Activated CD4-positive, alpha-beta T cell treated with anti-CD3 and anti-CD28 coated beads, Interleukin-2, amount 10 ng/mL, durations not matched to agents 24 days and 14 days (primary cell): ENCODE measurements at regions of chr9 and their contacts with region 1.

Region 1: DNA sequence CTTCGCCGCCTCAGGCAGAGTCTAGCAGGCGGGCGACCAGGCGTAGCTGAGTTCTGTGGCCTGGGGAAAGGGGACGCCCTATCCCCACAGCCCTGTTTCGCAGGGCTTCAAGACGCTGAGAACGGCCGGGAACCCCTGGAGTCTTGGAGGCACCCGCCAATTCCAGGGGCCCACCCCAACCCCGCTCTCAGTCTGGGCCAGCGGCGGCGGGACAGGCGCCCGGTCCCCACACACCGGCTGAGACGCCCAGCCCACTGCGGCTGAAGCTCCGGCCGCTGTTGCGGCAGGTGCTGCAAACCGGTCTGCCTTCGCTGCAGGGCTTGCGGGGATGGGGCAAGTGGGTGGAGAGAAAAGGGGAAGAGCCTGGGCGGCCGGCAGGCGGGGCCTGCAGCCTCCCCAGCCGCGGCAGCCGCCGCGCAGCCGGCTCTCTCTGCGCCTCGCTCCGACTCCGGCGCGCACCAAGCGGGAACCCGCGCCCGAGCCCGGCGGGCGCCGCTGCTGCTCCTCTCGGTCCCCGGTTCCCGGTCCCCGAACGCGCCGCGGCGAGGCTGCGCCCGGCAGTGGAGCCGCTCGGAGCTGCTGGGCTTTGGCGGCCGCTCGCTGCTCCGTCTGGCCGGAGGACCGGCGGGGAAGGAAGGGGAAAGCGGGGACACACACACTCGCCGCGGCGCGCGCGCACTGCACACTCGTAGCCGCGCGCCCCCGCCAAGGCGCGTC is at the start of gene PIP5K1B:
- DNase-seq: peak; percentile 89
- H3K4me3 Mint-ChIP-seq: peak within 1 kb of the TSS; percentile 94
- H3K27ac Mint-ChIP-seq: peak within 1 kb of the TSS; percentile 93
- H3K4me1 Mint-ChIP-seq: peaks cover 31% of the 10 kb centered on the region
- H3K27me3 Mint-ChIP-seq: peaks cover 57% of the 10 kb centered on the region
- total RNA-seq, gene PIP5K1B: 56.6 and 58.8 TPM in 2 replicates

Region 2: DNA sequence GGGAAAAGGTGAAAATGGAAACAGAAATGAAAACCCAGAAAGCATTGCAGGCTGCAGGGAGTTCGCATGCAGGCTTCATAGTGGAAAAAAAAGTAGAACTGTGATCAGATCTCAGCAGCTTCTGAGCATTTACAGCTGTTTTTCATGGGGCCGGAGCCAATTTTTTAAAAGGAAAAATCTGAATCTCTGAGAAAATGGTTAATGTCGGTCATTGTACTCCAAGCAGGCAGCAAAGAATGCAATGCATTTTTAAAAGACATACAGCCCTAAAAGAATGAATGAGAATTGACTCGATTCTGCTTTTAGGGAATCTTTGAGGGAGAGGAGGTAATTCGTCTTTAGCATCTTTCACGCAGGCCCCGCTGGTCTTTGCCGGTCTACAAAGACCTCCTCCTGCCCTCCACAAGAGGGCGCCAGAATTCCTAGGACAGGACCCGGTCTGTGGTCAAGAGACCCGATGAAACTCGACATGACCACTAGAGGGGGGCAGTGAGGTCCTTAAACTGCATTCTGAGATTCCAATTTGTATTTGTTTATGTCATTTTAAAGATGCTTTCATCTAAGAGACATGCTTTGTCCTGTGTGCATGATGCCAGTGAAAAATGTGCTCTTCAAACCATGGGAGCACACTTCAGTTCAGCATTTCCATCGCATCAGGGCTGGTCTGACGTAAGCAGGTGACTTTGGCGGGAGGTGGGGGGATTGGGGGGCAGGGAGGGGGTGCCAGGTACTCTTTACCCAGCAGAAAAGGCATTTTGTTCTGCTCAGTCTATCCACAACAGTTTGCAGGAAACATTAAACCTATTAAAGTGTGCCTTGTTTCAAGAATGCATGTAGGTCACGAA is 120.6 kb before region 1 on chr9:
- intact Hi-C with region 1: loop called (anchors 1 kb)
- DNase-seq: peak; percentile 94
- H3K4me3 Mint-ChIP-seq: no peak overlapping the region
- H3K27ac Mint-ChIP-seq: no peak overlapping the region
- H3K4me1 Mint-ChIP-seq: peaks cover 13% of the 10 kb centered on the region
- H3K27me3 Mint-ChIP-seq: peaks cover 2% of the 10 kb centered on the region

Region 3: GRCh38 chr9:68690088-68690487 is 14.9 kb before region 1 on chr9:
- intact Hi-C with region 1: no loop called
- DNase-seq: no peak
- H3K4me3 Mint-ChIP-seq: no peak overlapping the region
- H3K27ac Mint-ChIP-seq: no peak overlapping the region
- H3K4me1 Mint-ChIP-seq: peaks cover 7% of the 10 kb centered on the region
- H3K27me3 Mint-ChIP-seq: peaks cover 21% of the 10 kb centered on the region

Region 4: DNA sequence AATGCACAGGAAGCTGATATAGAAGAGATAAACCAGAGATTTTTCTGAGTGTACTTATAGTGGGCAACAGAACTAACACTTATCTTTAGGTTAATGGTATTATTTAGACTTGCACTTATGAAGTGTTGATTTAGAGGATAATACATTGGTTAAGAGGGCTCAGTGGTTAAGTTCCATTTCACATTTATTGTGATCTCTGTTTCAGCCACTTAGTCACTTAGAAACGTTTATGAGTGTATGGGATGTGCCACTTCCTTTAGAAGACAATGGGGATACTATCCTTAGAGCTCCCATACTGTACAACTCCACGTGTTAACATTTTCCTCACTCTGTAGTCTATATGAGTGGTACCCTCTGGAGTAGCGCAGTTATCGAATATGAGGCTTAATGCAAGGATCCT is 57.6 kb after region 1 on chr9:
- intact Hi-C with region 1: loop called (anchors 5 kb)
- DNase-seq: no peak
- H3K4me3 Mint-ChIP-seq: no peak overlapping the region
- H3K27ac Mint-ChIP-seq: no peak overlapping the region
- H3K4me1 Mint-ChIP-seq: peaks cover 4% of the 10 kb centered on the region
- H3K27me3 Mint-ChIP-seq: peaks cover 19% of the 10 kb centered on the region

Region 5: GRCh38 chr9:68802525-68803015 is 97.6 kb after region 1 on chr9:
- intact Hi-C with region 1: loop called (anchors 5 kb)
- DNase-seq: peak; percentile 74
- H3K4me3 Mint-ChIP-seq: no peak overlapping the region
- H3K27ac Mint-ChIP-seq: no peak overlapping the region
- H3K4me1 Mint-ChIP-seq: peaks cover 11% of the 10 kb centered on the region
- H3K27me3 Mint-ChIP-seq: no peaks in the 10 kb centered on the region

Region 6: GRCh38 chr9:68949271-68950000 is 244.5 kb after region 1 on chr9:
- intact Hi-C with region 1: loop called (anchors 2 kb)
- DNase-seq: peak; percentile 79
- H3K4me3 Mint-ChIP-seq: peak overlapping the region; percentile 28
- H3K27ac Mint-ChIP-seq: peak overlapping the region; percentile 81
- H3K4me1 Mint-ChIP-seq: peaks cover 59% of the 10 kb centered on the region
- H3K27me3 Mint-ChIP-seq: no peaks in the 10 kb centered on the region

Region 7: GRCh38 chr9:69027355-69028096 is 322.6 kb after region 1 on chr9:
- intact Hi-C with region 1: loop called (anchors 2 kb)
- DNase-seq: peak; percentile 84
- H3K4me3 Mint-ChIP-seq: no peak overlapping the region
- H3K27ac Mint-ChIP-seq: no peak overlapping the region
- H3K4me1 Mint-ChIP-seq: peaks cover 44% of the 10 kb centered on the region
- H3K27me3 Mint-ChIP-seq: peaks cover 2% of the 10 kb centered on the region